ENCODE measurements at regions of chr4 and their contacts with region 1.

Region 1: GRCh38 chr4:44629280-44629866 is 22.1 kb downstream of the YIPF7 start:
- DNase-seq: peak; percentile 49
- H3K4me3 ChIP-seq: no peak overlapping the region
- H3K27ac ChIP-seq: no peak overlapping the region
- H3K4me1 ChIP-seq: no peaks in the 10 kb centered on the region
- H3K27me3 ChIP-seq: no peaks in the 10 kb centered on the region
- CTCF ChIP-seq: peak; percentile 72 to 74

Region 2: DNA sequence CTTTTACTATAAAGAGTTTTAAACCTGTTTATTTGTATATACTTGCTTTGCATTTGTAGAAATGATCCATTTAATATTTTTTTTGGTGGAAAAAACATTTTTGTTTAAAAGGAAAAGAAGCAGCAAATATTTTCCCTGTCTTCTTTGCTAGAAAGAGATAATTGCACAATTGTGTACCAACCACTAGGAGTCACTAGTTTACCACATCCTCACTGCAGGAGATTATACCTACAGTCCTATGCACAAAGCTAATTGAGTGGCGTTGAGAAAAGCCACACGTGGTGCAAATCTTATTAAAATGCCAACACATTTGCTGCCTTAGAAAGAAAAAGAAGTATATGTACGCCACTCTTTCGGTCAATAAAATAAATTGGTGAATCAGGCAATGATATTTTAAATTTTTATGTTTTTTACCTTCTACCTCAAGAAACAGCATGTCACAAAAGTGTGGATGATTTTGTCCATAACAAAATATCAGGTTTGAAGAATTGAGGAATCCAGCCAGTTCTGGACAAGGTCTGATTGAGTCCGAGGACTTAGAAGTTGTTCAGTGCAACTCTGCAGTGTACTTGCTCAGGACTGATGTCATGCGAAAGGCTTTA is 1633.9 kb before region 1 on chr4:
- CTCF ChIA-PET with region 1: no interaction called
- dilution Hi-C with region 1: no loop called
- in situ Hi-C with region 1: loop called in 1 of 2 experiments (anchors 25 kb)
- intact Hi-C with region 1: loop called (anchors 5 kb)
- DNase-seq: peak; percentile 6
- H3K4me3 ChIP-seq: no peak overlapping the region
- H3K27ac ChIP-seq: no peak overlapping the region
- H3K4me1 ChIP-seq: no peaks in the 10 kb centered on the region
- H3K27me3 ChIP-seq: no peaks in the 10 kb centered on the region
- CTCF ChIP-seq: peak; percentile 81 to 87

Region 3: GRCh38 chr4:43132010-43132582 is 1497.3 kb before region 1 on chr4:
- CTCF ChIA-PET with region 1: no interaction called
- dilution Hi-C with region 1: no loop called
- in situ Hi-C with region 1: loop called in 1 of 2 experiments (anchors 25 kb)
- intact Hi-C with region 1: no loop called
- DNase-seq: peak; percentile 52
- H3K4me3 ChIP-seq: no peak overlapping the region
- H3K27ac ChIP-seq: no peak overlapping the region
- H3K4me1 ChIP-seq: peaks cover 4% of the 10 kb centered on the region
- H3K27me3 ChIP-seq: no peaks in the 10 kb centered on the region
- CTCF ChIP-seq: peak; percentile 82 to 89

Region 4: GRCh38 chr4:43776371-43776770 is 853.0 kb before region 1 on chr4:
- CTCF ChIA-PET with region 1: no interaction called
- dilution Hi-C with region 1: no loop called
- in situ Hi-C with region 1: no loop called
- intact Hi-C with region 1: loop called (anchors 10 kb)
- DNase-seq: no peak
- H3K4me3 ChIP-seq: no peak overlapping the region
- H3K27ac ChIP-seq: no peak overlapping the region
- H3K4me1 ChIP-seq: no peaks in the 10 kb centered on the region
- H3K27me3 ChIP-seq: no peaks in the 10 kb centered on the region
- CTCF ChIP-seq: peak; percentile 14 to 28

Region 5: DNA sequence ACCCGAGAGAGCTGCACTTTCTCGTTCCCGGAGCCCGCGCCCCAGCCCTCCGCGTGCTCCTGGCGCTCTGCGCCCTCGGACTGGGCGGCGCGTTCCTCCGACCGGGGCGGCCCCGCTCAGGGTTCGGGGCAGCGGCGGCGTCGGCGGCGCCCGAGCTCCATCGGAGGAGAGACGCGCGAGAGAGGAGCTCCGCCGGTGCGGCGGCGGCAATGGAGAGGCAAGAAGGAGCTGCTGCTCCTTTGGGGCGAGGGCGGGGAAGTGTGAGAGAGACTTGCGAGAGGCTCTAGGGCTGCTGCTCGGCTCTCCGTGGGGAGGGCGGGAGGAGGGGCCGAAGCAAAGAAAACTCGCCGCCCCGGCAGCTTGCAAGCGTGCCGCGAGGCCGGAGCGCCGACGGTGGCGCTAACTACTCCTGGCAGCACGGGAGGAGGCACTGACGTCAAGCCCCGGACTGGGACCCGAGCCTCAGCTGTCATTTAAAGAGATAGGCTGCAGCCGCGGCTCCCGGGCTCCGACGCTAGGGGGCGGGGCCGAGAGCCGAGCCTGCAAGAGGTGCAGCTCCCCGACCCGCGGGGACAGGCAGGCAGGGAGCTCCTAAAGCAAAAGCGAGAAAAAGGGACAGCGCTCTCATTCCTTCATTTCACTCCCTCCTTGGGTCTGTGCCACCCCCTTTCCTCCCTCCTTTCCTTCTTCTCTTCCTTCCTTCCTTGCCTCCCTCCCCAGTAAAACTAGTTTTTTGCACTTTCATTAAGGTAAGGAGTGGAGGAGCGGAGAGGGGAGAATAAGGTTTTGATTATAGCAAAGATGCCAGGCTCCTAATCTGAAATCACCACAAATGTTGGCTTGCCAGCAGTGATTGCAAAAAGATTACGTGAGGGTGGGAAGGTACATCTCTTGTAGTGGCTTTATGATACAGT is 180.6 kb before region 1 on chr4 and contains the start of gene KCTD8:
- CTCF ChIA-PET with region 1: interaction called, 3 read pairs
- dilution Hi-C with region 1: no loop called
- in situ Hi-C with region 1: no loop called
- intact Hi-C with region 1: loop called (anchors 1 kb)
- DNase-seq: peak; percentile 81
- H3K4me3 ChIP-seq: peak within 1 kb of the TSS; percentile 55 to 60 (median 57)
- H3K27ac ChIP-seq: no peak within 1 kb of the TSS
- H3K4me1 ChIP-seq: peaks cover 15% of the 10 kb centered on the region
- H3K27me3 ChIP-seq: peaks cover 38% of the 10 kb centered on the region
- CTCF ChIP-seq: peak; percentile 48 to 82
- total RNA-seq, gene KCTD8: not detected

Region 6: DNA sequence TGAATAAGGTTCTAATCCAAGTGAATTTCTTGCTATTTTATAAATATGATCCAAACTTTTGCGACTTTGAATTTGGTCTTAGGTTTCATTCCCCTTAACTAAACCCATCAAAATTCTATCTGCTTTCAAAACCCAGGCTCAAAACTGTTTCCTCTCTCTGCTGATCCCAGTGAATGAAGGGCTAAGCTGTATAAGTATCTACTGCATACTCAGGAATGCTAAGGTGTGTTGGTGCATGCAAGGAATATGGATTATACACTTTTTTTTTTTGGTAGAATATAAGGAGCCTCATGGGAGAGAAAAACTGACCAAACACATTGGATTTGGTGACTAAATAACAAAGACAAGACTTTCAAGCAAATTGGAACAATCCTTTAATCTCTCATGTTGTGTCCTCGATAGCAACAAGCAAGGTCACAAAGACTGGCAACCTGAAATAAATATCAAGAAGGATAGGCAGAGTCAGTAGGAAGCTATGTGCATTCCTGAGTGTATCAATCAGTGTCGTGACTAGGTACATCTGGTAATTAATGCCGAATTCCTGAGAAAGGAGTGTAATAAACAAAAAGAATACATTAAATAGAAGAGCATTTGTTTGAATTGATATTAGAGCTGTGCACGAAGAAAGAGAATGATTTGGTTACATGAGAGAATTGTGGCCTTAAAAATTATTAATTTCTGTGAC is 106.5 kb before region 1 on chr4:
- CTCF ChIA-PET with region 1: no interaction called
- dilution Hi-C with region 1: no loop called
- in situ Hi-C with region 1: no loop called
- intact Hi-C with region 1: no loop called
- DNase-seq: peak; percentile 55
- H3K4me3 ChIP-seq: no peak overlapping the region
- H3K27ac ChIP-seq: peak overlapping the region; percentile 86
- H3K4me1 ChIP-seq: peaks cover 12% of the 10 kb centered on the region
- H3K27me3 ChIP-seq: no peaks in the 10 kb centered on the region
- CTCF ChIP-seq: no peak

Region 7: GRCh38 chr4:44700427-44700826 is 71.1 kb after region 1 on chr4:
- CTCF ChIA-PET with region 1: no interaction called
- dilution Hi-C with region 1: no loop called
- in situ Hi-C with region 1: no loop called
- intact Hi-C with region 1: no loop called
- DNase-seq: no peak
- H3K4me3 ChIP-seq: no peak overlapping the region
- H3K27ac ChIP-seq: no peak overlapping the region
- H3K4me1 ChIP-seq: no peaks in the 10 kb centered on the region
- H3K27me3 ChIP-seq: no peaks in the 10 kb centered on the region
- CTCF ChIP-seq: no peak

Measured in mammary epithelial cell (primary cell).